ENCODE measurements at regions of chr2 and their contacts with region 1.

Region 1: DNA sequence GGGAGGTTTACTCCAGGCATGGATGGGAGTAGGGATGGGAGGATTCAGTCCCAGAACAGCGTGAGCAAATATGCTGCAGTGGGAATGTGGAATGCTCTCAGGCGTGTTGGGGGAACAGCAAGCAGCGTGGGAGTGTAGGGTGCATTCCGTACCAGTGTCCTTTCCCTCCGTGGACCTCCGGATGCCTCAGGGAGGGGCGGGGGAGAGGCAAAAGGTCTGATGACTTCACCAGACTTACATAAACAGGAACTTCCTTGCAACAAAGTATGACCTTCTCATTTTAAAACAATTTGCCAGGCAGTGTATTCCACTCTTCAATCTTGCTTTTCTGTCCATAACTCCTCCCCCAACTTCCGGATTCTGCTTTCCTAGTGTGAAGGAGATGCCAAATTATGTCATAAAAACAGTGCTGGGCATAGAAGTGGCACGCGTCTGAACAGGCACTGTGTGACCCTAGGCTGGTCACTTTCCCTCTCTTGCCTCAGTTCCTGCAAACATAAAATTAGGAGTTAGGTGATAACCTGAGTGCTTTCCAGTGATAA is 36.9 kb downstream of the RPL37A start:
- DNase-seq: peak; percentile 87

Region 2: DNA sequence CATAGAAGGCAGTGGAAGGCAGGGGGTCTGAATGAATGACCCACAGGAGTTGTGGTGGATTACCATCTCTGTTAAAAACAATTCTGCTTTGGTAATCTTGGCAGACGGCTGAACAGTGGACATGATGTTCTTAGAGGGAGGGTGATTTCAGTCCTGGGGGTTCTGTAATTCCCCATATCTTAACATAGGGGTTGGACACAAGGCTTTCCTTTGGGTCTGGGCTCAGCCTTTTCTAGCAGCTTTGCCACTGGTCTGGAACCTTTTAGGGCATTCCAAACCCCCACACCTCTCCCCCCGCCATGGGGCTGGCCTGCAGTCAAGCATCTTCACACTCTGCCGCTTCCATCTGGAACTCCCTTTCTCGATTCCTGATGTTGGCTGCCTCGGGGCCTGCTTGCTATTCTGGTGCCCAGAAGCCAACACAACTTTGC is 13.4 kb after region 1 on chr2:
- intact Hi-C with region 1: loop called (anchors 2 kb)
- DNase-seq: peak; percentile 83

Region 3: GRCh38 chr2:216555274-216555673 is 19.7 kb after region 1 on chr2:
- intact Hi-C with region 1: loop called (anchors 1 kb)
- DNase-seq: peak; percentile 85